ENCODE measurements at regions of chr11 and their contacts with region 1.

Region 1: DNA sequence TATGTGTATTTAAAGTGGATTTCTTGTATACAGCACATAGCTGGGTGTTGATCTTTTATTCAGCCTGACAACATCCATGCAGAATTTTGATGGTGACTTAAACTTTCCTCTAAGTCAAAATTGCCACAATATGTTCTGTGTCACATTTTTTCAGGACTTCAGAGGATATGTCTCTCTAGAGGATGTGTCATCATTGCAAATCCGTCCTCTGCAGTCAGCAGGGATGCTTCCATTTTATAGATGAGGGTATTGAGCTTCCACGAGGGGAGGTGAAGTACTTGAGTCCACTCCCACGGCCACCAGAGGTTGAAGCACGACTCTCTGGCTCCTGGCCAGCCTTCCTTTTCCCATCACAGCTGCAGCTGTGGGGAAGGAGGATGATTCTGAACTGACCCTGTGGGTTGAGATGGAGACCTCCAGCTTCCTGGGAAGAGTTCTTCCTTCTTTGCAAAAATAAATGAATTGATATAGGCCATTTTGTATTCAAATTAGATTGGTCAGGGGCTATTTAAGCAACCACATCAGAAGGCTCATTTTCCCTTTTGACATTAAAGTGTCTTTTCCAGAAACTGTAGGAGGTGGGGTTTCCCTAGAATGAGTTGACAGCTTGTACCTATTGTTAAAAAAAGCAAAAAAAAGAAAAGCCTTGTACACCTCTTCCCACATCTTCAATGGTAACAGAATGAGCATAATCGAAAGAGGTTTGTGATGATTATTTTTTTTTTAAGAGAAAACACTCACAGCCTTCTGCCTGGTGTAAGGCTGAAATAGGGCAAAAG is 55.2 kb upstream of the MYEOV start:
- DNase-seq: peak; percentile 35
- H3K4me3 Mint-ChIP-seq: peak overlapping the region; percentile 35
- H3K27ac Mint-ChIP-seq: peak overlapping the region; percentile 80
- H3K4me1 Mint-ChIP-seq: peaks cover 30% of the 10 kb centered on the region
- H3K27me3 Mint-ChIP-seq: peaks cover 3% of the 10 kb centered on the region

Region 2: DNA sequence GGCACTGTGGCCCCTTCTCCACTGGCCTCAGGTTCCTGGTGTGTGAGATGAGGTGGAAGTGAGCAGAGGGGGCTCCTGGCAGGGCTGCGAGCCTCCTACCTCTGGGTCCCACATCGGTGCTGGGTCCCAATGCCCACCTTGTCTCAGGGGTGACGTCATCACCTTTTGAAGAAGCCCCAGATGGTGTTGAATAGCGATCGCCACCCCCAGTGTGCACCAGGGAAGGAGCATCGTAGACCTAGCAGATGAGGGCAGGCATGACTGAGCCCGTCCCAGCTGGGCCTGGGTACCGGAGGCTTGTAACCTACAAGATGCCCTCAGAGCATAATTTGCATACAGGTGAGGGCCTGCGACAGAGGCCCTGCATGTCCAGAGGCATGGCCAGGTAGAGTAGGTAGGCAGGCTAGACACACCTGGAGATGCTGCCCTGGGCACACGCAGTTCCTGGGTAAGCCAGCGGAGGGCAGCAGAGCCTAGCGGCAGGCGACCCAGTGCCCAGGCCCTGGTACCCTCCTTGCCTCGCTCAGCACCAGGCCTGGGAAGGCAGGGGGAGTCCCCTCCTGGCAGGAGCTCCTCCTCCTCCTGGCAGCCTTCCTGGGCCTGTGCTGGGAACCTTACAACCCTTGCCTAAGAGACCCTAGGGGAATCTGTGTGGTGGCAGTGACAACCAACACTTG is 137.5 kb before region 1 on chr11:
- CTCF ChIA-PET with region 1: interaction called, 3 read pairs
- POLR2A ChIA-PET with region 1: no interaction called
- intact Hi-C with region 1: loop called (anchors 2 kb)
- DNase-seq: peak; percentile 79
- H3K4me3 Mint-ChIP-seq: no peak overlapping the region
- H3K27ac Mint-ChIP-seq: no peak overlapping the region
- H3K4me1 Mint-ChIP-seq: peaks cover 2% of the 10 kb centered on the region
- H3K27me3 Mint-ChIP-seq: peaks cover 4% of the 10 kb centered on the region

Region 3: GRCh38 chr11:69122642-69123431 is 115.9 kb before region 1 on chr11:
- CTCF ChIA-PET with region 1: no interaction called
- POLR2A ChIA-PET with region 1: no interaction called
- intact Hi-C with region 1: loop called (anchors 5 kb)
- DNase-seq: peak; percentile 88
- H3K4me3 Mint-ChIP-seq: peak overlapping the region; percentile 18
- H3K27ac Mint-ChIP-seq: peak overlapping the region; percentile 30
- H3K4me1 Mint-ChIP-seq: peaks cover 37% of the 10 kb centered on the region
- H3K27me3 Mint-ChIP-seq: no peaks in the 10 kb centered on the region

Region 4: GRCh38 chr11:69144316-69145061 is 94.3 kb before region 1 on chr11:
- CTCF ChIA-PET with region 1: no interaction called
- POLR2A ChIA-PET with region 1: no interaction called
- intact Hi-C with region 1: loop called (anchors 1 kb)
- DNase-seq: peak; percentile 71
- H3K4me3 Mint-ChIP-seq: no peak overlapping the region
- H3K27ac Mint-ChIP-seq: peak overlapping the region; percentile 78
- H3K4me1 Mint-ChIP-seq: peaks cover 15% of the 10 kb centered on the region
- H3K27me3 Mint-ChIP-seq: peaks cover 6% of the 10 kb centered on the region

Region 5: DNA sequence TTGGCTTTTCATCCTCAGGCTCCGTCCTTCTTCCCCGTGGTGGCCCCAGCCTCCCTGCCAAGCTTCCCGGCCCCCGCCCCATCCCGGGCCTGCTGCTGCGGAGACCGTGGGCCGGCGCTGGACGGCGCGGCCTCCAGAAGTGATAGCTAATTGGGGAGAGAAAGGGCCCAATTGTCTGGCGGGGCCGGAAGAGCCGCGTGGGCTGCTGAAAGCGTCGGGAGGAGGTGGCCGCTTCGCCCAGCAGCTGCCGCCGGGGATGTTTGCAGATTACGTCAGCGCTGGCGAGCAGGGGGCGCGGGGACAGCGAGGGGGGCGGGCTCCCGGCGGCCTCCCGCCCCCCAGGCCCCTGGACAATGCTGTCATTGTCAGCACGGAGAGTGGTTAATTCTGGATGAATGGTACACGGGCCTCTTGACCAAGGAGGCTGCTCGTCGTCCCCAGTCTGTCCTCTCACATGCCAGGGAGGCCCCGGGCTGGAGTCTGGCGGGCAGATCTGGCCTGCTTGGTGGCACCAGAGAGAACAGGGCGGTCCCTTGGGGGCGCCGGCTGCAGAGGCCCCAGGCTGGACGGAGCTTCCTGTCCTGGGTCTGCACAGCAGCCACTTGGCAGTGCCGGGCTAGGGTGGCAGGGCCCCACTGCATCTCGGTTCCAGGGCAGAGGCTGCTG is 81.5 kb before region 1 on chr11:
- CTCF ChIA-PET with region 1: no interaction called
- POLR2A ChIA-PET with region 1: no interaction called
- intact Hi-C with region 1: loop called (anchors 5 kb)
- DNase-seq: peak; percentile 20
- H3K4me3 Mint-ChIP-seq: no peak overlapping the region
- H3K27ac Mint-ChIP-seq: no peak overlapping the region
- H3K4me1 Mint-ChIP-seq: peaks cover 9% of the 10 kb centered on the region
- H3K27me3 Mint-ChIP-seq: peaks cover 11% of the 10 kb centered on the region

Region 6: GRCh38 chr11:69215784-69216415 is 22.9 kb before region 1 on chr11:
- CTCF ChIA-PET with region 1: no interaction called
- POLR2A ChIA-PET with region 1: no interaction called
- intact Hi-C with region 1: no loop called
- DNase-seq: no peak
- H3K4me3 Mint-ChIP-seq: no peak overlapping the region
- H3K27ac Mint-ChIP-seq: no peak overlapping the region
- H3K4me1 Mint-ChIP-seq: peaks cover 9% of the 10 kb centered on the region
- H3K27me3 Mint-ChIP-seq: peaks cover 14% of the 10 kb centered on the region

Region 7: GRCh38 chr11:69642913-69643632 is 404.3 kb after region 1 on chr11:
- CTCF ChIA-PET with region 1: interaction called, 3 read pairs
- POLR2A ChIA-PET with region 1: no interaction called
- intact Hi-C with region 1: loop called (anchors 5 kb)
- DNase-seq: peak; percentile 81
- H3K4me3 Mint-ChIP-seq: peak overlapping the region; percentile 57
- H3K27ac Mint-ChIP-seq: no peak overlapping the region
- H3K4me1 Mint-ChIP-seq: peaks cover 17% of the 10 kb centered on the region
- H3K27me3 Mint-ChIP-seq: peaks cover 22% of the 10 kb centered on the region